Thyroid gland (tissue), 4 donors: ENCODE measurements at regions of chr2 and their contacts with region 1.

Region 1: DNA sequence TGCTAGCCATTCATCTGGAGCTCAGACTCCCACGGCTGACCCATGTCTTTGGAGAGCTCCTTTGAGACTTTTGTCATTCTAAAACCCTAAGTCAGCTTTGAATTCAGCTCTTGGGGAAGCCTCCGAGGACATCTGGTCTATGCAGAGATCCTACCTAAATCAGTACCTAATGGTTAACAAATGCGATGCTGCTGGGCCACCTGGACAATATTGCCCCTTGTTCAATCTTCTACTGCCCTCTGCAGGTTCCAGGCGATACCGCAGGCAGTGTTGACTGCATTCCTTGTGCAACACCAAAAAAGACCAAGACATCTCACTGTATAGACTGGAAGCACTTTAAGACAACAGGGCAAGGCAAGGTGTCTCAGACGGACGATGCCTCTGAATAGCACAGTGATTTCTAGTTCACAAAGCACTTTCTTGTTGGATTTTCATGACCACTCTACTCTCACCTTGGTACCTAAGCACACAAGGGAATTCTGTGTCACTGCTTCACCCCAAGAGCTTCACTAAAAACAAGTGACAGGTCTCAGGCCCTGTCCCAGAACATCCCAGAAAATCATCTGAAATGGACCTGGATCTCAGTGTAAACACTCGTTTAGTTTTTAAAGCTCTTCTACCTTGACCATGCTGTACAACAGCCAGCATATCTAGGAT is 80.9 kb downstream of the XDH start:
- DNase-seq: peak; percentile 69 to 80
- H3K4me3 ChIP-seq: no peak overlapping the region
- H3K27ac ChIP-seq: no peak overlapping the region
- H3K4me1 ChIP-seq: no peaks in the 10 kb centered on the region
- H3K27me3 ChIP-seq: no peaks in the 10 kb centered on the region
- CTCF ChIP-seq: peak; percentile 71 to 88 (median 84)
- POLR2A ChIP-seq: no peak

Region 2: GRCh38 chr2:30714811-30715709 is 618.6 kb before region 1 on chr2:
- intact Hi-C with region 1: loop called (anchors 2 kb)
- DNase-seq: no peak
- H3K4me3 ChIP-seq: no peak overlapping the region
- H3K27ac ChIP-seq: no peak overlapping the region
- H3K4me1 ChIP-seq: no peaks in the 10 kb centered on the region
- H3K27me3 ChIP-seq: no peaks in the 10 kb centered on the region
- CTCF ChIP-seq: no peak
- POLR2A ChIP-seq: no peak

Region 3: DNA sequence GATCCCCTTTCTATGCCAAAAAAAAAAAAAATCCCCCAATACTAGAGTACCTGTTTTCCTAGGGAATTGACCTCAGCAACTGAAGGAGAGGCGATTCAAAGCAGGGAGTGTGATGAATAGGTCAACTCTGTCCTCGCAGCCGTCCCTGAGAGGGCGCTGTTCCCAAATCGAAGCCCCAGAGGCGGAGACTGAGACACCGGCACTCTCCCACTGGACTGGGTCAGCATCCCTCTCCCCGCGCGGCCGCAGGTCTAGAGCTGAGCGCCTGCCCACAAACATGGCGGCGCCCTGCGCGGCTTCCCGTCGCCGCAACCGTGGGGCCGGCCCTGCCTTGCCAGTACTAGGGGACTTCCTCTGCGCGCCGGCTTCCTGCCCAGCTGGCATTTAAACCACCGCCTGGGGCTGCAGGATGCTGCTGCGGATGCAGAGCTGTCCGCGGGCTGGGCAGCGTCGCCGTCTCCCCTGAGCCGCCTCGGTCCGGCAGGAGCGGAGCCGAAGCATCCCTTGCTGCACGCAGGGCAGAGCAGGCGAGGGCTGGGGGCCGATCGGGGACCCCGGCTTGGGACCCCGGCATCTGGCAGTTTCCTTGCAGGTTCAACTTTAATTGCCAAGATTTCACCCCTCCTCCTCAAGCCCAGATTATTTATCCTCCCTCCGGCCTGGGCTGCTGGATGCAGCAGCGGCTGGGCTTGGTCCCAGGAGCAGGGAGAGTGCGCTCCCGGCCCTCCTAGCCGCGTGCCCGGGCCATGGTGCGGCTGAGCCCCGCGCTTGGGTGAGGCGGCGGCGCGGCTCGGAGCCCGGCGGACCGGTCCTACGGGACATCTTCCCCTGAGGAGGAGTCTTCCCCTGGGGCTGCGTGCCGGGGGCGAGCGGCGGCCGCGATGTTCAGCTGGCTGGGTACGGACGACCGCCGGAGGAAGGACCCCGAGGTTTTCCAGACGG is 99.6 kb before region 1 on chr2 and contains the start of gene EHD3:
- intact Hi-C with region 1: loop called (anchors 10 kb)
- DNase-seq: peak; percentile 83 to 88
- H3K4me3 ChIP-seq: peak within 1 kb of the TSS; percentile 29 to 49 (median 40)
- H3K27ac ChIP-seq: peak within 1 kb of the TSS in 1 of 3 donors; percentile 17
- H3K4me1 ChIP-seq: peaks cover 5 to 8% of the 10 kb centered on the region in 2 donors
- H3K27me3 ChIP-seq: no peaks in the 10 kb centered on the region
- CTCF ChIP-seq: peak in 5 of 6 experiments; percentile 19 to 63 (median 53)
- POLR2A ChIP-seq: peak in 1 of 2 donors; percentile 41
- total RNA-seq, gene EHD3: 4.2 to 9.2 (median 5.5) TPM